Activated T-helper 2 cell treated with anti-CD3 and anti-CD28 coated beads, Interferon-gamma antibody, Interleukin-2, Interleukin-4, amounts not matched to agents 10 μg/mL and 5 μg/mL and 100 μg/mL, durations not matched to agents 14 hours and 24 hours and 36 hours (primary cell): ENCODE measurements at regions of chr6 and their contacts with region 1.

Region 1: DNA sequence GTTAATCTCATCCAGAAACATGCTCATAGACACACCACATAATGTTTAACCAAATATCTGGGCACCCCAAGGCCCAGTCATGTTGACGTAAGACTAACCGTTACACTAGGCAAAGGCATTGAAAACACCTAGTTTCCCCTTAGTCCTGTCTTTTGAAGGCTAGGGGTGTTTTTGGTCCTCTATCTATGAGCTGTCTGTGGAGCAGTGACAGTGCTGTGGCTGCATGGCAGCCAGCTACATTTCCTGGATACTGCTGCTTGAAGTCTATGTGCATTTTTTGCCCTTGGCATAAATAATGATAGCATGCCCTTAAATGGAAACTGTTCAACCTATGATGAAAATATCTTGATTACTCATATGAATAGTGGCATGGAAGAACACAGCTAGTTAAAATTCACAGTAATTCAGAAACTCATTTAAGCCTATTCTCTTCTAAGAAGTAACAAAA is 18.6 kb downstream of the FARS2 start:
- DNase-seq: peak; percentile 22
- H3K4me3 Mint-ChIP-seq: no peak overlapping the region
- H3K27ac Mint-ChIP-seq: peak overlapping the region; percentile 85
- H3K4me1 Mint-ChIP-seq: peaks cover 53% of the 10 kb centered on the region
- H3K27me3 Mint-ChIP-seq: no peaks in the 10 kb centered on the region

Region 2: DNA sequence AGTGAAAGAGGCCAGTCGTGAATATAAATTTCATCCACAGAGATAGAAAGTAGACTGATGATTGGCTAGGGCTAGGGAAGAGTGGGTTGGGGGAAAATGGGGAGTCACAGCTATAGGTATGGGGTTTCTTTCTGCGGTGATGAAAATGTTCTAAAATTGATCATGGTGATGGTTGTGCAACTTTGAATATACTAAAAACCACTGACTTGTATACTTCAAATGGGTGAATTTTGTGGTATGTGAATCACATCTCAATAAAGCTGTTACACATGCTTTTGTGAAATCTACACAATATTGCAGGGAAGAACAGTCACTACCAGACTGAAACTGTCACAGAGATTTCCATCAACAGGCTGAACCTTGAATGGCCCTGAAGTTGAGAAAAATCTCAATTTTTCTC is 80.6 kb before region 1 on chr6:
- intact Hi-C with region 1: loop called (anchors 1 kb)
- DNase-seq: no peak
- H3K4me3 Mint-ChIP-seq: no peak overlapping the region
- H3K27ac Mint-ChIP-seq: peak overlapping the region; percentile 70
- H3K4me1 Mint-ChIP-seq: peaks cover 12% of the 10 kb centered on the region
- H3K27me3 Mint-ChIP-seq: no peaks in the 10 kb centered on the region

Region 3: GRCh38 chr6:5266423-5266822 is 13.5 kb before region 1 on chr6:
- intact Hi-C with region 1: no loop called
- DNase-seq: no peak
- H3K4me3 Mint-ChIP-seq: no peak overlapping the region
- H3K27ac Mint-ChIP-seq: peak overlapping the region; percentile 39
- H3K4me1 Mint-ChIP-seq: peaks cover 30% of the 10 kb centered on the region
- H3K27me3 Mint-ChIP-seq: no peaks in the 10 kb centered on the region